ENCODE measurements at regions of chr5 and their contacts with region 1.

Region 1: DNA sequence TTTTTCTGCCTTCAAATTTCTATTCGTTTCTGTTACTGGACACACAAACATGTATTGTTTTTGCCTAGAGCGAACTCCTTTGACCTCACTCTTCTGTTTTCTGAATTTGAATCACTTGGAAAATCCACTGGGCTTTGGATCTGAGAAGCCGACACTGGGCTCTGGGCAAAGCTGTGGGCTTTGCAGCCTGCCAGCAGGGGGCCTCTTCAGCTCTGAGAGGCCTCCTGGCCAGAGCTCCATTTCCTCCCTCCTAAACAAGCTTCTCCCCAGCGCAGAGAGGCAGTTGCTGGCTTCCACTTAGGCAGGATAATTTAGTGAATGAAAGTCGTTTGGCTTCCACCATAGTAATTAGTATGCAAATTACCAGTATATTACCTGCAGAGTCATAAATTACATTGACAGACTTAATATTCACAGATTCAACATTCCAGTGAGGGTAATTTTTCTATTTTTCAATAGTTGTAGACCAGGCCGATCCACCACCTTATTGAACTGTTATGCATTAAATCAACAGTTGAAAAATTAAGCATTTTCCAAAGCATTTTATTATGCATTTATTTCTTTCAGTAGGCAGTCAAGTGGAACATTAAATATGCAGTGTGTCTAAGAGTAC is 104.0 kb upstream of the ZNF366 start:
- DNase-seq: peak; percentile 84
- ATAC-seq: peak; percentile 99

Region 2: DNA sequence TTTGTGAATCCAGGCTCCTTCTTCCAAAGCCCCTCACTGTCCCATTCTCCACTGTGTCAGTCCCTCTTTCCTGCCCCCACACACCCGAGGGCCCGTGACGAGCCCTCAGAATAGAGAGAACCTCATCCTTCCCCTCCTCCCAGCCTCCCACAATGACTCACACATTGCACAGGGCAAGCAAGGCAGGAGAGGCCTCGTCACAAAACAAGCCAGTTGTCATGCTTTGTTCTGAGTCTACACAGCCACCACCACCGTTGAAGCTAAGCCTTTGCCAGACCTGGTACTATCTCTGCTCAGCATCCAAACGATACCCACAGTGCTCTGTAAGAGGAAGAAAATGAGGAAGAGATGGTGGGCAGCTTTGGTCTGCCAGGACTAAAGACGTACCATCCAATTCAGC is 38.2 kb after region 1 on chr5:
- intact Hi-C with region 1: no loop called
- DNase-seq: no peak
- ATAC-seq: no peak

Region 3: GRCh38 chr5:72816311-72817145 is 205.3 kb after region 1 on chr5 and contains the start of gene TNPO1:
- intact Hi-C with region 1: loop called (anchors 5 kb)
- DNase-seq: peak; percentile 97
- ATAC-seq: peak; percentile 96
- total RNA-seq, gene TNPO1: 61.2 TPM

Measured in Right ventricle myocardium superior (tissue), 1 donor.